Caco-2 (cell line): ENCODE measurements at regions of chr19 and their contacts with region 1.

Region 1: GRCh38 chr19:57632987-57633831 is at the start of gene ZNF211:
- DNase-seq: peak; percentile 94
- H3K4me3 ChIP-seq: peak within 1 kb of the TSS; percentile 95
- H3K4me3 Mint-ChIP-seq: peak within 1 kb of the TSS; percentile 86
- H3K27ac Mint-ChIP-seq: peak within 1 kb of the TSS; percentile 81
- H3K4me1 ChIP-seq: 0 out of 2 replicates have a peak, but pooled peaks cover 7% of the 10 kb centered on the region
- H3K4me1 Mint-ChIP-seq: peaks cover 12% of the 10 kb centered on the region
- H3K27me3 ChIP-seq: no peaks in the 10 kb centered on the region
- H3K27me3 Mint-ChIP-seq: no peaks in the 10 kb centered on the region
- CTCF ChIP-seq: no peak
- total RNA-seq, gene ZNF211: 10.5 and 13.3 TPM in 2 replicates

Region 2: DNA sequence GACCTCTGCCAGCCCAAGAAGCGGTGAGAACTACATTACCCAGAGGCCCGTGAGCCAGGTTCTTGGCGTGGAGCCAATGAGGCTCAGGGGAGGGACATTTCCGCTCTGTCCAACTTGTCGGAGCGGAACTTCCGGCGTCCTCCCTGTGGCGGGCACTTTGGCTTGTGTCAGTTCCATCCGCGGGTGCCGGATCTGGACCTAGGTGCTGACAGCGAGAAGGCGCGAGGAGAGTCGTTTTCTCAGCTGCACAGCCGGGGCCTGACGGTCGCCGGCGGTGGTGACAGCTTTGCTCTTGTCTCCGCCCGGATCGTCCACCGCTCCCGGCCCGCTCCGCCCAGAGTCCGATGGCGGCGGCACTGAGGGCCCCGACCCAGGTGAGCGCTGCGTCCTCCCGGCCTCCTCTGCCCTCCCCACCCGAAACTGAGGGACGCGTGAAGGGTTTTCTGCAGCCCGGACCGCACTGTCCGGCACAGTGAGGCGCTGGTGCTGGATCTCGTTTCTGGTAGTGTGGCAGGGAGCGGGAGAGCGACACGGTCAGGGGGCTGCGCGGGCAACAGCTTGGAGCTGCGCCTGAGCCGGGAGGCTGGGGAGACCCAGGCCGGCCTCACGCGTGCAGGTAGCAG is 33.3 kb before region 1 on chr19 and contains the start of gene ZNF530:
- CTCF ChIA-PET with region 1: interaction called, 5 read pairs
- POLR2A ChIA-PET with region 1: no interaction called
- intact Hi-C with region 1: loop called (anchors 1 kb)
- DNase-seq: peak; percentile 88 to 92
- H3K4me3 ChIP-seq: peak within 1 kb of the TSS; percentile 83
- H3K4me3 Mint-ChIP-seq: peak within 1 kb of the TSS; percentile 77
- H3K27ac Mint-ChIP-seq: peak within 1 kb of the TSS; percentile 19
- H3K4me1 ChIP-seq: no peaks in the 10 kb centered on the region; the same call in 1 of the 2 replicates
- H3K4me1 Mint-ChIP-seq: no peaks in the 10 kb centered on the region
- H3K27me3 ChIP-seq: no peaks in the 10 kb centered on the region
- H3K27me3 Mint-ChIP-seq: peaks cover 4% of the 10 kb centered on the region
- CTCF ChIP-seq: peak in 1 of 2 experiments; percentile 1
- total RNA-seq, gene ZNF530: 8.6 and 8.8 TPM in 2 replicates

Region 3: GRCh38 chr19:57682226-57682766 is 49.1 kb after region 1 on chr19:
- CTCF ChIA-PET with region 1: interaction called, 3 read pairs
- POLR2A ChIA-PET with region 1: interaction called, 6 read pairs
- intact Hi-C with region 1: loop called (anchors 1 kb)
- DNase-seq: no peak
- H3K4me3 ChIP-seq: peak overlapping the region; percentile 98
- H3K4me3 Mint-ChIP-seq: peak overlapping the region; percentile 86
- H3K27ac Mint-ChIP-seq: peak overlapping the region; percentile 88
- H3K4me1 ChIP-seq: peaks cover 6% of the 10 kb centered on the region; the same call in 1 of the 2 replicates
- H3K4me1 Mint-ChIP-seq: peaks cover 21% of the 10 kb centered on the region
- H3K27me3 ChIP-seq: no peaks in the 10 kb centered on the region
- H3K27me3 Mint-ChIP-seq: no peaks in the 10 kb centered on the region
- CTCF ChIP-seq: no peak

Region 4: DNA sequence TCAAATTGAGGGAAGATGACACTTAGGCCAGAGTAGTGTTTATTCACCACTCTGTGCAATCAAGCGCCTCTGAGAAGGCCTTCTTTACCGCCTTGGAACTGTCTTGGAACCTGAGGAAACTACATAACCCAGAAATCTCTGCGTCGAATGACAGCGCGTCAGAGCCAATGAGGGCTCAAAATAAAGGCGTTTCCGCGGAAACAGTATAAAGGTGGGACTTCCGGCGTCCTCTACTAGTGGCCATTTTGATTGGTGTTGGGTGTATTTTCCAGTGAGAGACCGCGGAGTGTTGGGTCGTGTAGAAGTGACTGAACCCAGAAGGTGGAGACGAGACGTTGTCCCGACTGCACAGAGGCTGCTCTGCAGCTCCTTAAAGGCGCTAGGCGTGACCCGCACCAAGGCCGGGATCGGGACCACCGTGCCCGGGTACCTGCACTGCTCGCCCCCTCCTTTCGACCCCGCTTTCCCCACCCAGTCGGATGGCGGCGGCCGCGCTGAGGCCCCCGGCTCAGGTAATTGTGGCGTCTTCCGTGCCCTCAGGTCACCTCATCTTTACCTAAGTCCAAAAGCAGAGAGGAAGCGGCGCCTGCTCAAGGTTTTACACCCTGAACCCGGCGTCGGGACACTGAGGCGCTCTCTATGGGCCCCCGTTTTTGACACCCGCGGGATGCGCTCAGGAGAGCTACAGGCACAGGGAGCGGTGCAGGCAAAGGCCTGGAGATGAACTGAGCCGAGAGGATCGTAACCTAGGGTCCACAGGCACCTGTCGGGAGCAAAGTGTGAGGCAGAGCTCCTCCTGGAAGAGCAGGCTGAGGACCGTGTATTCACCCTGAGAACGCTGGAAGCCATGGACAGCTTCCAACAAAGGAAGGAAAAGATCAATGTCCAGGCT is 113.6 kb after region 1 on chr19 and contains the start of gene ZNF776:
- CTCF ChIA-PET with region 1: no interaction called
- POLR2A ChIA-PET with region 1: no interaction called
- intact Hi-C with region 1: loop called (anchors 1 kb)
- DNase-seq: peak; percentile 86 to 89
- H3K4me3 ChIP-seq: peak within 1 kb of the TSS; percentile 100
- H3K4me3 Mint-ChIP-seq: peak within 1 kb of the TSS; percentile 100
- H3K27ac Mint-ChIP-seq: peak within 1 kb of the TSS; percentile 99
- H3K4me1 ChIP-seq: peaks cover 4% of the 10 kb centered on the region; the same call in 1 of the 2 replicates
- H3K4me1 Mint-ChIP-seq: peaks cover 12% of the 10 kb centered on the region
- H3K27me3 ChIP-seq: no peaks in the 10 kb centered on the region
- H3K27me3 Mint-ChIP-seq: no peaks in the 10 kb centered on the region
- CTCF ChIP-seq: no peak
- total RNA-seq, gene ZNF776: 15.6 and 16.0 TPM in 2 replicates